ENCODE measurements at regions of chr16 and their contacts with region 1.

Region 1: DNA sequence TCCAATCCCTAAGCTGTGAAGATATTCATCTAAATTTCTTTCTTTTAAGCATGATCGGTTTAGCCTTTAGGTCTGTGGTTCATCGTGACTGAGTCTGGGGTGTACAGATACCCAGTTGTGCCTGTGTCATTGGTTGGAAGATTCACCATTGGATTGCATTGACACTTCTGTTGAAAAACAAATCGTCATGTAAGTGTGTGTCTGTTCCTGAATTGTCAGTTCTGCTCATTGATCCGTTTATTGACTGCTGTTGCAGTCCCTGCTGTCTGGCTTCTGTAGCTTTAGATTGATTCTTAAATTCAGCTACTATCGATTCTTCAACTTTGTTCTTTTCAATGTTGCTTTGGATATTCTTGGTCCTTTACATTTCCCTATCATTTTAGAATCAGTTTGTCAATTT is 21.0 kb upstream of the ZNF469 start:
- DNase-seq: no peak
- ATAC-seq: no peak
- H3K4me3 ChIP-seq: no peak overlapping the region
- H3K27ac ChIP-seq: no peak overlapping the region
- H3K4me1 ChIP-seq: no peaks in the 10 kb centered on the region
- H3K27me3 ChIP-seq: no peaks in the 10 kb centered on the region
- CTCF ChIP-seq: no peak

Region 2: DNA sequence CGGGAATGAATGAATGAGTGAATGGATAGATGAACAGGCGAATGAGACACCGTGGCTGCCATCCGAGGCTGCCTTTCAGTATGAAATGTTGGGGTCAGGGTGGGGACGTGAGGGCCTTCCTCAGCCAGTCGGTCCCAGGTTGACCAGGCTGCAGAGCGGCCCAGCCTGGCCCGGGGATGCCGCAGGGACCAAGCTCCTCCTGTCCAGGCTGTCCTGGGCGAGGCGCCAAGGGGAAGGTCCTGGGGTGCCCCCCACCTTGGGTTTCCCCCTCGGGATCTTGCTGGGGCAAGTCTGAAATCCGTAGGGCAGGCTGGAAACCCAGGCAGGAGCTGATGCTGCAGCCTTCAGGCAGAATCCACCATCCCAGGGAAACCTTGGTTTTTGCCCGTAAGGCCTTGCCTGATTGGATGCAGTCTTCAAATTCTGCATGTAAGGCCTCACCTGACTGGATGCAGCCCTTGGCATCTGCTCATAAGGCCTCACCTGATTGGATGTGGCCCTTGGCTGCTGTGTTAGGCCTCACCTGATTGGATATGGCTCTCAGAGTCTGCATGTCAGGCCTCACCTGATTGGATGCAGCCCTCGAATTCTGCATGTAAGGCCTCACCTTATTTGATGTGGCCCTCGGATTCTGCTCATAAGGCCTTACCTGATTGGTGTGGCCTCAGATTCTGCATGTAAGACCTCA is 40.7 kb before region 1 on chr16:
- CTCF ChIA-PET with region 1: no interaction called
- POLR2A ChIA-PET with region 1: no interaction called
- in situ Hi-C with region 1: no loop called
- intact Hi-C with region 1: no loop called
- DNase-seq: no peak
- ATAC-seq: no peak
- H3K4me3 ChIP-seq: no peak overlapping the region
- H3K27ac ChIP-seq: no peak overlapping the region
- H3K4me1 ChIP-seq: no peaks in the 10 kb centered on the region
- H3K27me3 ChIP-seq: no peaks in the 10 kb centered on the region
- CTCF ChIP-seq: no peak

Region 3: DNA sequence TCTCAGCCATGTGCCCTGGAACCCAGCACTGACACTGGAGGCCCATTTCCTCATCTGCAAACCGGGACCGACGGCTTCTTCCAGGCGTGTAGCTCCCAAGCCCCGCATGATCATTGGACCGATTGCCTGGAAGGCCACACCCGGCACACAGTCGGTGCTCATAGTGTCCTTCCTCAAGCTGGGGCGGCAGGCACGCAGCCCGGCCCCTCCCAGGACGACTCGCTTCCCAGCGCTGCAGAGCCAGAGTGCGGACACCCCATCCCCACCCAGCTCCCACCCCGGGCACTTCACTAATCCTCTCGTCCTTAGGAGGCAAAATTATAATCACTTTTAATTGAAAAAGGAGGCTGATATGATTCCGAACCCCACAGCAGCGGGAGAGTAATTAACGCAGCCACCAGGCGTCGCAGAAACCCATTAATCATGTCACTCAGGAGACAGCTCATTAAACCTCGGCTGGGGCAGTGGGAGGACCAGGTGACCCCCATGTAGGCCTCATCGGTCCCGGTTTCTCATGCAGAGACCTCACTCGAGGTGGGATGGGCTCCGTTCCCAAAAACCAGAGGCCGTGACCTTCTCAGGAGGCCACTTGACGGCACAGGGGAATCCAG is 54.0 kb after region 1 on chr16:
- CTCF ChIA-PET with region 1: no interaction called
- POLR2A ChIA-PET with region 1: no interaction called
- in situ Hi-C with region 1: no loop called
- intact Hi-C with region 1: no loop called
- DNase-seq: no peak
- ATAC-seq: no peak
- H3K4me3 ChIP-seq: no peak overlapping the region
- H3K27ac ChIP-seq: no peak overlapping the region
- H3K4me1 ChIP-seq: no peaks in the 10 kb centered on the region
- H3K27me3 ChIP-seq: no peaks in the 10 kb centered on the region
- CTCF ChIP-seq: no peak

Region 4: GRCh38 chr16:88430524-88431446 is 69.0 kb after region 1 on chr16:
- CTCF ChIA-PET with region 1: no interaction called
- POLR2A ChIA-PET with region 1: interaction called, 13 read pairs
- in situ Hi-C with region 1: no loop called
- intact Hi-C with region 1: no loop called
- DNase-seq: no peak
- ATAC-seq: no peak
- H3K4me3 ChIP-seq: no peak overlapping the region
- H3K27ac ChIP-seq: no peak overlapping the region
- H3K4me1 ChIP-seq: no peaks in the 10 kb centered on the region
- H3K27me3 ChIP-seq: no peaks in the 10 kb centered on the region
- CTCF ChIP-seq: no peak